Activated CD4-positive, alpha-beta memory T cell treated with anti-CD3 and anti-CD28 coated beads, Interleukin-2, amount 10 ng/mL, durations not matched to agents 7 days and 5 days (primary cell): ENCODE measurements at regions of chr12 and their contacts with region 1.

Region 1: DNA sequence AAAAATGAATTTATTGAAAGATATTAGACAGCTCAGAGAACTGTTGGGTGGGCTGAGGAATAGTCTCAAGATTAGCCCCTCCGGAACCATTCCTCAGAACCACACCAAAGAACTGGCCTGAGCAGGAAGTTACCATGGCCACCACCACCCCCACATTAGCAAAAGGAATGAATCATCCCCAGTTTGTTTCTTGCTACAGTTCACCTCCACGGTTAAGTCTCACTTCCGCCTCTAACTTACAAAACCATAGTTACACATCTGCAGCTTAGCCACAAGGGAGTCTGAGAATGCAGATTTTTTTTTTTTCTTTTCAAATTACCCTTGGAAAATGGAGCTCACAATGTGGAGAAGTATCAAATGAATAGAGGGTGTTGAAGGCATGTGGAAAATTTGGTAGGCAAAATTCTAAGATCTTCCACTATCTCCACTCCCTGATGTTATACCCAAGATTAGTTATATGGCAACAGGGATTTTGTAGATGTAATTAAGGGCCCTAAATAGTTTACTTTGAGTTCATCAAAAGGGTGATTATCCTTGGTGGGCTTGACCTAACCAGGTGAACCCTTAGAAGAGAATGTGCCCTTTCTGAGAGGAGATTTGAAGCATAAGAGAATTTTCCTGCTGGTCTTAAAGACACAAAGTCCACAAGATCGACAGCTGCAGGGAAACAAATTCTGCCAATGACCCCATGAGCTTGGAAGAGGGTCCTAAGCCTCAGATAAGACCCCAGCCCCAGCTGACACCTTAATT is 129.8 kb upstream of the KRR1 start:
- DNase-seq: peak; percentile 71
- H3K4me3 Mint-ChIP-seq: peak overlapping the region; percentile 0
- H3K27ac Mint-ChIP-seq: peak overlapping the region; percentile 38
- H3K4me1 Mint-ChIP-seq: peaks cover 51% of the 10 kb centered on the region
- H3K27me3 Mint-ChIP-seq: no peaks in the 10 kb centered on the region

Region 2: GRCh38 chr12:75656650-75657049 is 15.4 kb after region 1 on chr12:
- CTCF ChIA-PET with region 1: interaction called, 6 read pairs
- POLR2A ChIA-PET with region 1: interaction called, 15 read pairs
- DNase-seq: no peak
- H3K4me3 Mint-ChIP-seq: no peak overlapping the region
- H3K27ac Mint-ChIP-seq: no peak overlapping the region
- H3K4me1 Mint-ChIP-seq: peaks cover 39% of the 10 kb centered on the region
- H3K27me3 Mint-ChIP-seq: peaks cover 12% of the 10 kb centered on the region

Region 3: GRCh38 chr12:75677522-75677921 is 36.3 kb after region 1 on chr12:
- CTCF ChIA-PET with region 1: no interaction called
- POLR2A ChIA-PET with region 1: no interaction called
- DNase-seq: no peak
- H3K4me3 Mint-ChIP-seq: no peak overlapping the region
- H3K27ac Mint-ChIP-seq: no peak overlapping the region
- H3K4me1 Mint-ChIP-seq: no peaks in the 10 kb centered on the region
- H3K27me3 Mint-ChIP-seq: peaks cover 2% of the 10 kb centered on the region